Heart right ventricle (tissue), 16 donors: ENCODE measurements at regions of chr17 and their contacts with region 1.

Region 1: DNA sequence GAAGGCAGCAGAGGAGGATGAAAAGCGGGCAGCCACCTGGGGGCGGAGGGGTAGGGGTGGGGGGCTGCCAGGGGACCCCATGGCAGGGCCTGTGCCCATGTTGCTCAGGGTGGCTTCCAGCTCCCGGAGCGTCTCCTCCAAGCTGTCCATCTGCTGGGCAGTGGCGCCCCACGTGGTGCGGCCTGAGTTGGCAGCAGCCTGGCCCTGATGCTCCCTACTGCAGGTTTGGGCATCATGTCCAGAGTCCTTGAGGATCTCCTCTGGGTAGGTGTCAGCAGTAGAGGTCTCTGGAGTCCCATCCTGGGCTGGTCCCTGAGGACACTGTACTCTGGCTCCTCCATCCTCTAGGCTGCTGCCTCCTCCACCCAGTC is 60.9 kb downstream of the SRCIN1 start:
- DNase-seq: no peak
- ATAC-seq: no peak
- H3K4me3 ChIP-seq: no peak overlapping the region
- H3K27ac ChIP-seq: no peak overlapping the region
- H3K4me1 ChIP-seq: peaks cover 0 to 5% (median 0%) of the 10 kb centered on the region in 9 donors
- H3K27me3 ChIP-seq: peaks cover 0 to 44% (median 31%) of the 10 kb centered on the region in 7 donors
- CTCF ChIP-seq: no peak

Region 2: GRCh38 chr17:38485146-38485468 is 59.7 kb before region 1 on chr17:
- intact Hi-C with region 1: no loop called
- DNase-seq: no peak
- ATAC-seq: no peak
- H3K4me3 ChIP-seq: no peak overlapping the region
- H3K27ac ChIP-seq: peak overlapping the region in 8 of 10 donors; percentile 2 to 84 (median 27)
- H3K4me1 ChIP-seq: peaks cover 0 to 40% (median 19%) of the 10 kb centered on the region in 9 donors
- H3K27me3 ChIP-seq: no peaks in the 10 kb centered on the region
- CTCF ChIP-seq: peak in 2 of 9 donors; percentile 1 to 12

Region 3: DNA sequence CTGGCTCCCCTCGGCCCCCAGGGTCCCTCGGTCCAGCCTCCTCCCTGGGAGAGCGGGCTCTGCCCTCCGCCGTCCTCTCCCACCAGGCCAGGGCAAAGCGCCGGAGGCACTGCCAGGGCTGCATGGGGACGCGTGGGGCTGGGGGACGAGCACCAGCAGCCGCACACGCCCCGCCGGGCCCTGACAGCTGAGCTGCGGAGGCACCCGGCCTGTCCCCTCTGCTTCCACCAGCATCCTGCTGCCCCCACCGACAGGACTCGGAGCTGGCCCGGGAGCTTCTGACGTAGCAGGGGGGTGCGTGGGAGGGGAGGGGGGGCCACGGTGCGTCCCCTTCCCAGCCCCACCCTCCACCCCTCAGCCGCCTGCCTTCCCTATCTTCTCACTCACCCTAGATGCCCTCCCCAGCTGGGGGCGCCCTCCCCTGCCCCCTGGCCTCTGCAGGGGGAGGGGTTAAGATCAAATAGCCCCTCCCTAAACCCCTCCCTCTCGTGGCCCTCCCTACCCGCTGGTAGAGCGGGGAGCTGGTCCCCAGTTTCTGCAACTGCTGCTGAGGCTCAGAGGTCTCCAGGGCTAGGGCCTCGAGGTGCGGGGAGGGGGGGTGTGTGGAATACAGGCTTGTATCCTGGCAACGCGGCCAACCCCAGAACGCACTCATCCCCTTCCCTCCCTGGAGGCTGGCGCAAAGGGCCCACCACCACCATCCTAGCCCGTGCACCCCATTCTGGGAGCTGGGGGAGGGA is 59.8 kb after region 1 on chr17:
- intact Hi-C with region 1: loop called in 1 of 10 experiments (anchors 5 kb)
- DNase-seq: no peak
- ATAC-seq: no peak
- H3K4me3 ChIP-seq: no peak overlapping the region
- H3K27ac ChIP-seq: no peak overlapping the region
- H3K4me1 ChIP-seq: peaks cover 6 to 24% (median 17%) of the 10 kb centered on the region in 9 donors
- H3K27me3 ChIP-seq: peaks cover 0 to 97% (median 68%) of the 10 kb centered on the region in 7 donors
- CTCF ChIP-seq: no peak

Region 4: GRCh38 chr17:38674749-38675615 is 130.2 kb after region 1 on chr17 and contains the start of gene EPOP:
- intact Hi-C with region 1: no loop called
- DNase-seq: peak; percentile 87 to 88
- ATAC-seq: peak; percentile 85 to 92 (median 90)
- H3K4me3 ChIP-seq: peak within 1 kb of the TSS; percentile 41 to 66 (median 59)
- H3K27ac ChIP-seq: peak within 1 kb of the TSS in 2 of 10 donors; percentile 28 to 56
- H3K4me1 ChIP-seq: peaks cover 8 to 37% (median 30%) of the 10 kb centered on the region in 9 donors
- H3K27me3 ChIP-seq: peaks cover 19 to 63% (median 58%) of the 10 kb centered on the region in 7 donors
- CTCF ChIP-seq: peak in 2 of 9 donors; percentile 4
- total RNA-seq, gene EPOP: 0.25 to 1.3 (median 0.64) TPM

Region 5: DNA sequence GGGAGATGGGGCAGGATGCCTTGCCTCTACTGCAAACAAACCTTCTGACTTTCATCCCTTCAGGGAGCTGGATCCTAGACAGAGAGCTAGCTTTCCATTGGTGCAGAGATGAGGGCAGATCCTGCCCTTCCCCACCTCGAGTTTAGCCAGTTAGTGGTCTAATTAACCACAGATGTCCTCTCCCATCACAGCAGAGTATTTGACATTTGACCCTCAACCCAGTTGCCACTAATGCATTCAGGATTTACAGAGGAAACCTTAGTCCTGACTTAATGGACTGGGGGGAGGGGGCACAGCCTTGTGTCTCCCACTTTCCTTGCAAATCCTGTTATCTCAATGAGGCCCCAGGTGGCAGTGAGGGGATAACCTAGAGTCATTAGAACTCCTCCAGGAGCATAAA is 244.4 kb after region 1 on chr17:
- intact Hi-C with region 1: no loop called
- DNase-seq: no peak
- ATAC-seq: no peak
- H3K4me3 ChIP-seq: no peak overlapping the region
- H3K27ac ChIP-seq: no peak overlapping the region
- H3K4me1 ChIP-seq: peaks cover 0 to 32% (median 20%) of the 10 kb centered on the region in 9 donors
- H3K27me3 ChIP-seq: no peaks in the 10 kb centered on the region
- CTCF ChIP-seq: no peak